ENCODE measurements at regions of chr7 and their contacts with region 1.

Region 1: DNA sequence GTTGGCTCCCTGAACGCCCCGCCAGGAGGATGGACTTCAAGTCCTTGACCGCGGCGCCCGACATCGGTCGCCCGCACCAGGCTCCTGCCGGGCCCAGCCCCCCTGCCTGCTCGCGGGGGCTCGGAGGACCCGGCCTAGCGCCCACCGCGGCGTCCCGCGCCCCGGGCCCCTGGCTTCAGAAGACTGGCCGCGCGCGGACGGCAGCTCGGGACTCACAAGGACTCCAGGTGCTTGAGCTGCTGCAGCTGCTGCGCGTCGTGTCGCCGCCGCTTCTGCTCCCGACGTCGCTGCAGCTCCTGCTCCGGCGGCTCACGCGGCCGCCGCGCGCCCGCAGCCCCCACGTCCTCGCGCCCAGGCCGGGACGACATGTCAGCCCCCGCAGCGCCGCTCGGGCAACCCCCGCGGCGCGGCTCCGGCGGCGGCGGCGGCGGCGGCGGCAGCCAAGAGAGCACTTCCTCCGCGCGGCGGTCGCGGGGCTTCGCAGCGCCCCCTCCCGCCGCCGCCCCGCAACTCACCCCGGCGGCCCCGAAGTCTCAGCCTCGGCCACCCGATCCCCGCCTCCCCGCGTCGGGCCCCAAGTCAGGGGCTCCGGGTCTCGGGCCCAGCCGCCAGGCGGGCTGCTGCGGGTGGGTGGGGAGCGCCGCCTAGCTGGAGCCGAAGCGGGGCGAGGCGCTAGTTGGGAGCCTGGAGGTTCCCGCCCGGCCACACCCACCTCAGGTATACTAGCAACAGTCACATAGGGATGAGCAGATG is at the start of gene RP9:
- DNase-seq: peak; percentile 56 to 89 (median 72)
- ATAC-seq: peak; percentile 88
- H3K4me3 ChIP-seq: peak within 1 kb of the TSS; percentile 58 to 74
- H3K4me3 Mint-ChIP-seq: peak within 1 kb of the TSS; percentile 87
- H3K27ac ChIP-seq: peak within 1 kb of the TSS; percentile 22 to 55
- H3K27ac Mint-ChIP-seq: peak within 1 kb of the TSS; percentile 86
- H3K4me1 ChIP-seq: peaks cover 24% of the 10 kb centered on the region
- H3K4me1 Mint-ChIP-seq: peaks cover 39% of the 10 kb centered on the region
- H3K27me3 ChIP-seq: no peaks in the 10 kb centered on the region
- H3K27me3 Mint-ChIP-seq: peaks cover 10% of the 10 kb centered on the region
- CTCF ChIP-seq: peak; percentile 36
- total RNA-seq, gene RP9: 20.2 to 21.8 TPM

Region 2: GRCh38 chr7:32461484-32461883 is 647.7 kb before region 1 on chr7:
- CTCF ChIA-PET with region 1: no interaction called
- POLR2A ChIA-PET with region 1: no interaction called
- intact Hi-C with region 1: no loop called
- DNase-seq: no peak
- ATAC-seq: no peak
- H3K4me3 ChIP-seq: no peak overlapping the region
- H3K4me3 Mint-ChIP-seq: no peak overlapping the region
- H3K27ac ChIP-seq: no peak overlapping the region
- H3K27ac Mint-ChIP-seq: no peak overlapping the region
- H3K4me1 ChIP-seq: no peaks in the 10 kb centered on the region
- H3K4me1 Mint-ChIP-seq: no peaks in the 10 kb centered on the region
- H3K27me3 ChIP-seq: no peaks in the 10 kb centered on the region
- H3K27me3 Mint-ChIP-seq: peaks cover 20% of the 10 kb centered on the region
- CTCF ChIP-seq: no peak

Region 3: GRCh38 chr7:32490127-32490822 is 618.9 kb before region 1 on chr7 and contains the start of gene LSM5:
- CTCF ChIA-PET with region 1: interaction called, 7 read pairs
- POLR2A ChIA-PET with region 1: no interaction called
- intact Hi-C with region 1: loop called (anchors 1 kb)
- DNase-seq: peak; percentile 78 to 96 (median 89)
- ATAC-seq: peak; percentile 60
- H3K4me3 ChIP-seq: peak within 1 kb of the TSS; percentile 75 to 79
- H3K4me3 Mint-ChIP-seq: peak within 1 kb of the TSS; percentile 86
- H3K27ac ChIP-seq: peak within 1 kb of the TSS; percentile 85
- H3K27ac Mint-ChIP-seq: peak within 1 kb of the TSS; percentile 98
- H3K4me1 ChIP-seq: peaks cover 19% of the 10 kb centered on the region
- H3K4me1 Mint-ChIP-seq: peaks cover 29% of the 10 kb centered on the region
- H3K27me3 ChIP-seq: no peaks in the 10 kb centered on the region
- H3K27me3 Mint-ChIP-seq: no peaks in the 10 kb centered on the region
- CTCF ChIP-seq: no peak
- total RNA-seq, gene LSM5: 32.1 to 38.6 TPM

Region 4: GRCh38 chr7:32765185-32765584 is 344.0 kb before region 1 on chr7:
- CTCF ChIA-PET with region 1: interaction called, 7 read pairs
- POLR2A ChIA-PET with region 1: no interaction called
- intact Hi-C with region 1: loop called in 1 of 2 experiments (anchors 2 kb)
- DNase-seq: no peak
- ATAC-seq: no peak
- H3K4me3 ChIP-seq: no peak overlapping the region
- H3K4me3 Mint-ChIP-seq: no peak overlapping the region
- H3K27ac ChIP-seq: no peak overlapping the region
- H3K27ac Mint-ChIP-seq: no peak overlapping the region
- H3K4me1 ChIP-seq: peaks cover 4% of the 10 kb centered on the region
- H3K4me1 Mint-ChIP-seq: peaks cover 12% of the 10 kb centered on the region
- H3K27me3 ChIP-seq: peaks cover 0 to 7% of the 10 kb centered on the region in 2 experiments
- H3K27me3 Mint-ChIP-seq: peaks cover 39% of the 10 kb centered on the region
- CTCF ChIP-seq: no peak

Region 5: GRCh38 chr7:32891800-32892520 is 217.2 kb before region 1 on chr7:
- CTCF ChIA-PET with region 1: interaction called, 8 read pairs
- POLR2A ChIA-PET with region 1: interaction called, 8 read pairs
- intact Hi-C with region 1: loop called (anchors 1 to 5 kb)
- DNase-seq: peak; percentile 92 to 99 (median 97)
- ATAC-seq: peak; percentile 61
- H3K4me3 ChIP-seq: peak overlapping the region; percentile 72 to 83
- H3K4me3 Mint-ChIP-seq: peak overlapping the region; percentile 92
- H3K27ac ChIP-seq: peak overlapping the region; percentile 95 to 100
- H3K27ac Mint-ChIP-seq: peak overlapping the region; percentile 99
- H3K4me1 ChIP-seq: peaks cover 42% of the 10 kb centered on the region
- H3K4me1 Mint-ChIP-seq: peaks cover 48% of the 10 kb centered on the region
- H3K27me3 ChIP-seq: no peaks in the 10 kb centered on the region
- H3K27me3 Mint-ChIP-seq: no peaks in the 10 kb centered on the region
- CTCF ChIP-seq: no peak

Region 6: DNA sequence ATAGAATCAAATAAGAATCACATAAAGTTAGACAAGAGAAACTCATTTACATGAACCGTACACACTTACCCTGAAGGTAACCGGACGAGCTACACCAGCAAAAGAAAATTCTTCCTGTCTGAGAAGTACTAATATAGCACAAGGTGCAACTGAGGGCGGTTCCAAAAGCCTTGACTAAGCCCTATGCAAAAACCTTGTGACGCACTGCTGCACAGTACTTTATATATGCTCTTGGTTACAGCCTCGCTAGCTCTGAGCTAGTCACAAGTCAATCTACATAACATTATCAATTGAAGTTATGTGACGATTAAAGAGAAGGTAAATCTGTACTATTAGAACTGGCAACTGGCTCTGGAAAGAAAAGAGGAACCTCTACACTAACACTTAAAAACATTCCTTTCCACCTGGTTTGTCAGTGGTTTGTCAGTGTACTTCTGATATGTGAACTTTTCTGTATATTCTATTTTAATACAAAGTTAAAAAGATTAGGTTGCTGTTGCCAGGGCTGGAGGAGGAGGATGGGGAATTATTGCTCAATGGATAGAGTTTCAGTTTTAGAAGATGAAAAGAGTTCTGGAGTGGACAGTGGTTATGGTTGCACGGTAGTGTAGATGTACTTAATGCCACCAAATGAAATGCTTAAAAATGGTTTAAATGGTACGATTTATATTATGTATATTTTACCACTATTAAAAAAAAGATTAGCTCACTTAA is 68.2 kb before region 1 on chr7:
- CTCF ChIA-PET with region 1: interaction called, 5 read pairs
- POLR2A ChIA-PET with region 1: interaction called, 4 read pairs
- intact Hi-C with region 1: loop called in 1 of 2 experiments (anchors 2 kb)
- DNase-seq: peak; percentile 36 to 87 (median 63)
- ATAC-seq: peak; percentile 99
- H3K4me3 ChIP-seq: peak overlapping the region; percentile 3 to 23
- H3K4me3 Mint-ChIP-seq: peak overlapping the region; percentile 77
- H3K27ac ChIP-seq: peak overlapping the region; percentile 54 to 75
- H3K27ac Mint-ChIP-seq: peak overlapping the region; percentile 90
- H3K4me1 ChIP-seq: peaks cover 25% of the 10 kb centered on the region
- H3K4me1 Mint-ChIP-seq: peaks cover 61% of the 10 kb centered on the region
- H3K27me3 ChIP-seq: no peaks in the 10 kb centered on the region
- H3K27me3 Mint-ChIP-seq: no peaks in the 10 kb centered on the region
- CTCF ChIP-seq: no peak

Region 7: GRCh38 chr7:33128990-33129805 is 20.0 kb after region 1 on chr7 and contains the start of gene BBS9:
- CTCF ChIA-PET with region 1: interaction called, 6 read pairs
- POLR2A ChIA-PET with region 1: interaction called, 5 read pairs
- intact Hi-C with region 1: loop called (anchors 1 kb)
- DNase-seq: peak; percentile 80 to 94 (median 91)
- ATAC-seq: peak; percentile 95
- H3K4me3 ChIP-seq: peak within 1 kb of the TSS; percentile 85 to 88
- H3K4me3 Mint-ChIP-seq: peak within 1 kb of the TSS; percentile 96
- H3K27ac ChIP-seq: peak within 1 kb of the TSS; percentile 65 to 72
- H3K27ac Mint-ChIP-seq: peak within 1 kb of the TSS; percentile 91
- H3K4me1 ChIP-seq: peaks cover 14% of the 10 kb centered on the region
- H3K4me1 Mint-ChIP-seq: peaks cover 28% of the 10 kb centered on the region
- H3K27me3 ChIP-seq: no peaks in the 10 kb centered on the region
- H3K27me3 Mint-ChIP-seq: no peaks in the 10 kb centered on the region
- CTCF ChIP-seq: no peak
- total RNA-seq, gene BBS9: 15.7 to 16.7 TPM

Region 8: DNA sequence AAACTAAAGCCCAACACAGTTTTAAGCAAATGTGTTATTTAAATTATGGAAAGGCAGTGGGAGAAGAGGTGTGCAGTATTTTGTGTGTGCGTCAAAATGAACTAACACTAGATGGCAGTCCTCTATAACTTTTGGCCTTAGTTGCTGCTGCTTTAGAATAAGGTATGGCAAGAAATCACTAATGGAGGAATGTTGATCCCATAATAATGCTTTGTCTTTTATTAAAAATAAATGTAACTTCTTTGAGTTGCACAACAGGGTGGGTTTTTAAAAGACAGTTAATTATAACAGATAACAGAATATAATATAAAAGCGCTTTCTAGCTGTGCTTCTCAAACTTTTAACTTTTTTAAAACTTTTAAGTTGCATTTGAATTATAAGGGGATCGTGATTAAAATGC is 76.6 kb after region 1 on chr7:
- CTCF ChIA-PET with region 1: no interaction called
- POLR2A ChIA-PET with region 1: no interaction called
- intact Hi-C with region 1: no loop called
- DNase-seq: peak in 2 of 9 experiments; percentile 49 to 62
- ATAC-seq: no peak
- H3K4me3 ChIP-seq: no peak overlapping the region
- H3K4me3 Mint-ChIP-seq: no peak overlapping the region
- H3K27ac ChIP-seq: no peak overlapping the region
- H3K27ac Mint-ChIP-seq: no peak overlapping the region
- H3K4me1 ChIP-seq: peaks cover under 1% of the 10 kb centered on the region
- H3K4me1 Mint-ChIP-seq: peaks cover 6% of the 10 kb centered on the region
- H3K27me3 ChIP-seq: no peaks in the 10 kb centered on the region
- H3K27me3 Mint-ChIP-seq: no peaks in the 10 kb centered on the region
- CTCF ChIP-seq: peak; percentile 63

Region 9: DNA sequence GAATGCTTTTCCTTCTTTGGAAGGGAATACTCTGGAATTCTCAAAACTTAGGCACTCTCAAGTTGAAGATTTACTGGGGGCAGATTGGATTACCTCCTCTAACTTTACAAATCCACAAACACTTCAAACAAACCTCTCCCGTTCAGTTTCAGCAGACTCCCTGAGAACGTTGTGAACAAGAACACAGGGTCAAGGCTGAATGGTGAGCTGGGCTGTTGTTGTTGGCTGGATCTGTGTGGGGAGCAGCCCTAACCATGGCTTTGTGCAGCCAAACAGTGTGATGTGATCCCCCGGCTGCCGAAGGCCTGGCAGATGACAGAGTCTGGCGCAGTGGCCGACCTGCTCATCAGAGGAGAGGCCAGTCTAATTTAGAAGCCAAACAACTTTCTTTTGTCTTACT is 889.3 kb after region 1 on chr7:
- CTCF ChIA-PET with region 1: no interaction called
- POLR2A ChIA-PET with region 1: no interaction called
- intact Hi-C with region 1: no loop called
- DNase-seq: no peak
- ATAC-seq: no peak
- H3K4me3 ChIP-seq: no peak overlapping the region
- H3K4me3 Mint-ChIP-seq: no peak overlapping the region
- H3K27ac ChIP-seq: no peak overlapping the region
- H3K27ac Mint-ChIP-seq: no peak overlapping the region
- H3K4me1 ChIP-seq: no peaks in the 10 kb centered on the region
- H3K4me1 Mint-ChIP-seq: peaks cover 12% of the 10 kb centered on the region
- H3K27me3 ChIP-seq: no peaks in the 10 kb centered on the region
- H3K27me3 Mint-ChIP-seq: no peaks in the 10 kb centered on the region
- CTCF ChIP-seq: no peak

Measured in CD8-positive, alpha-beta T cell (primary cell).